Mucosa of descending colon (tissue), 3 donors: ENCODE measurements at regions of chr10 and their contacts with region 1.

Region 1: GRCh38 chr10:96129387-96130325 is at the start of gene ZNF518A:
- DNase-seq: peak; percentile 93 to 97 (median 95)
- ATAC-seq: peak; percentile 98
- H3K4me3 ChIP-seq: peak within 1 kb of the TSS; percentile 58
- H3K4me1 ChIP-seq: no peaks in the 10 kb centered on the region
- CTCF ChIP-seq: no peak
- total RNA-seq, gene ZNF518A: 32.0 to 52.2 (median 34.0) TPM

Region 2: GRCh38 chr10:96089670-96090462 is 39.8 kb before region 1 on chr10:
- intact Hi-C with region 1: loop called in 1 of 2 experiments (anchors 2 kb)
- DNase-seq: peak; percentile 95 to 97 (median 96)
- ATAC-seq: peak; percentile 98
- H3K4me3 ChIP-seq: peak overlapping the region; percentile 46
- H3K4me1 ChIP-seq: peaks cover 8% of the 10 kb centered on the region
- CTCF ChIP-seq: no peak